ENCODE measurements at regions of chr19 and their contacts with region 1.

Region 1: DNA sequence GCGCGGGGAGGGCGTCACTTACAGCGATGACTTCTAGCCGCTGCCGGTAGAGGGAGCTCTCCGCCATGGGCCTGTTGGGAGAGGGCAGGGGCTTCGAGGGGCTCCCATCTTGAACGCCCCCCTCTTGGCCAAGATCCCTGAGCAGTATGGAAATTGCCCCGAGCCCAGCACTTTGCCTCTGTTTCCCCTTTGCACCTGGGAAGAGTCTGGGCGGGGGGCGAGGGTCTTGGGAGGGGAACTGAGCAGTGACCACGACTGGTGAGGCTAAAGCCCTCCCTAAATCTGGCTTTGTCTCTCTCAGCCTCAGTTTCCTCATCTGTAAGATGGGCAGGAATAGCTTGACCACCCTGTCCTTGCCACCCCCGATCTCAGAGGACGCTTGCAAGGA is 2.8 kb downstream of the PALM3 start:
- DNase-seq: peak; percentile 28
- H3K4me3 ChIP-seq: no peak overlapping the region
- H3K27ac ChIP-seq: no peak overlapping the region
- H3K4me1 ChIP-seq: peaks cover 0 to 16% (median 12%) of the 10 kb centered on the region in 4 donors
- H3K27me3 ChIP-seq: peaks cover 60% of the 10 kb centered on the region
- CTCF ChIP-seq: peak; percentile 54 to 70 (median 64)
- EP300 ChIP-seq: no peak
- POLR2A ChIP-seq: no peak

Region 2: GRCh38 chr19:13872695-13873389 is 186.2 kb before region 1 on chr19:
- in situ Hi-C with region 1: loop called in 2 of 4 experiments (anchors 10 to 25 kb)
- intact Hi-C with region 1: no loop called
- DNase-seq: no peak
- H3K4me3 ChIP-seq: peak overlapping the region; percentile 27 to 53 (median 38)
- H3K27ac ChIP-seq: peak overlapping the region in 3 of 4 donors; percentile 19 to 43 (median 26)
- H3K4me1 ChIP-seq: peaks cover 0 to 12% (median 7%) of the 10 kb centered on the region in 4 donors
- H3K27me3 ChIP-seq: no peaks in the 10 kb centered on the region
- CTCF ChIP-seq: peak in 3 of 5 experiments; percentile 8 to 31 (median 26)
- EP300 ChIP-seq: no peak
- POLR2A ChIP-seq: no peak

Region 3: DNA sequence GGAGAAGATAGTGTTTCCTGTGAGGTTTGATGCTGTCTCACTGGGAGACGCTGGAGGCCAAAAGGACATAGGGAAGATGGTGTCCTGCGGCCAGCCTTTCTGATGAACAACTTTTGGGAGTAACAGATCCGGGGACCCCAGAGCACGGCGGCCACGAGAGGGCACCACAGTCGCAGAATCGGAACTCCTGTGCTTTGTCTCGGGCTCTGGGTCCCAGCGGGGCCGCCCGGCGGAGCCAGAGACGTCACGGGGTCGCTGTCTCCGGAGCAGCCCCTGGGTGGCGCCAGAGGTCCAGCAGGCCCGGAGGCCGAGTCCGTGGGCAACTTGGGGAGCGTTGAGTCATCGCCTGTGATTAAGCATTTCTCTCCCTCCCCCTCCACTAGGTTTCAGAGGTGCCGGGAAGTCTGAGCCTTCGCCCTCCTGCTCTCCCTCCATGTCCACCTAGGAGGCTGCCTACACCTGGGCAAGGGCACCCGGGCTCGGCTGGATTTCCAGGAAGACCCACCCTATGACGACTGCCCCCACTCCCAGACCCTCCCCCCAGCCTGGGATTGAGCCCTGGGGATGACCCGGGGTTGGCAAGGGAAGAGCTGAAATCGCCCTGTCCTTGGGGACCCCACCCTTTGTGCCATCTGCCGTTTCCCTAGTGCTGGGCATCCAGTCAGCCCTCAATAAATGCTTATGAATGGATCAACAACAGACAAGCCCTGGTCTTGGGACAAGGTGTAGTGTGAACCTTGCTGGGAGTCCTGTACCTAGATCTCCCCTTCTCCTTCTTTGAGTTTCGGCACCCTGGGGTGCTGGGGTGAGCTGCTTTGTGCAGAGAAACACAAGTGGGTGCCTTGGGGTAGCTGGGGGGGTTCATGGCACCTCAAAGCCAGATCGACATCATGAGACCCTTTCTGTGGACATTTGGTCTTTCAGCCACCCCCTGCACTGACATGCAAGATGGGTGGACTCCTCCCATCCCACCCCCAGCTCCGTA is 178.7 kb before region 1 on chr19:
- in situ Hi-C with region 1: loop called in 3 of 4 experiments (anchors 10 to 25 kb)
- intact Hi-C with region 1: no loop called
- DNase-seq: peak; percentile 99
- H3K4me3 ChIP-seq: peak overlapping the region in 2 of 4 donors; percentile 18 to 26
- H3K27ac ChIP-seq: peak overlapping the region; percentile 72 to 85 (median 84)
- H3K4me1 ChIP-seq: peaks cover 14 to 41% (median 35%) of the 10 kb centered on the region in 4 donors
- H3K27me3 ChIP-seq: no peaks in the 10 kb centered on the region
- CTCF ChIP-seq: peak; percentile 97 to 100 (median 98)
- EP300 ChIP-seq: peak; percentile 18
- POLR2A ChIP-seq: no peak

Region 4: DNA sequence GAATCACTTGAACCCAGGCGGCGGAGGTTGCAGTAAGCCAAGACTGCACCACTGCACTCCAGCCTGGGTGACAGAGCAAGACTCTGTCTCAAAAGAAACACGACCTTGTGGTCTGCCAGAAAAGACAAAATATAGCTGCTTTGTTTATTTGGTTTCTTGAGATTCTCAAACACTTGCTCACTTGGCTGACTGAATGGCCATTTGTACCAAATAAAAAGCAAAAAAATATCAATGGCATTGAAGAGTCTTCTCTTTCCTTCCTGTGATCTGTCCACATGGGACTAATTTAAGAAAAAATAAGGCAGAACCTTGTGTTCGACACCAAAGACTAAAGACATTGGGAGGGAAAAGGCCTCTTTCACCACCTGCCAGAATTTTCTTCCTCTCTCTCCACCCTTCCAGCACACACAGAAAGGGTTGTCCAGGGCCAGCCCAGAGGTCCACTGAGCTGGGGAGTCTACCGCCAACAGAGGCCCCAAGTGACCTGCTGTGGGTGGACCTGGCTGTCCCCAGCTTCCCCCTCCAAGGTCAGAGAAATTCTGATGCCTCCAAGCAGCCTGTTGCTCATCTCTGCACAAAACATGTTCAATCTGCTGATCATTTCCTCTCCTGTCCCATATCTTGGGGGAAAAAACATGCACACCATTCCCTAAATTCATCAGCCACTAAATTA is 159.0 kb before region 1 on chr19:
- in situ Hi-C with region 1: loop called in 2 of 4 experiments (anchors 10 to 25 kb)
- intact Hi-C with region 1: no loop called
- DNase-seq: no peak
- H3K4me3 ChIP-seq: no peak overlapping the region
- H3K27ac ChIP-seq: peak overlapping the region; percentile 53 to 77 (median 72)
- H3K4me1 ChIP-seq: peaks cover 0 to 12% (median 8%) of the 10 kb centered on the region in 4 donors
- H3K27me3 ChIP-seq: no peaks in the 10 kb centered on the region
- CTCF ChIP-seq: no peak
- EP300 ChIP-seq: no peak
- POLR2A ChIP-seq: no peak

Region 5: DNA sequence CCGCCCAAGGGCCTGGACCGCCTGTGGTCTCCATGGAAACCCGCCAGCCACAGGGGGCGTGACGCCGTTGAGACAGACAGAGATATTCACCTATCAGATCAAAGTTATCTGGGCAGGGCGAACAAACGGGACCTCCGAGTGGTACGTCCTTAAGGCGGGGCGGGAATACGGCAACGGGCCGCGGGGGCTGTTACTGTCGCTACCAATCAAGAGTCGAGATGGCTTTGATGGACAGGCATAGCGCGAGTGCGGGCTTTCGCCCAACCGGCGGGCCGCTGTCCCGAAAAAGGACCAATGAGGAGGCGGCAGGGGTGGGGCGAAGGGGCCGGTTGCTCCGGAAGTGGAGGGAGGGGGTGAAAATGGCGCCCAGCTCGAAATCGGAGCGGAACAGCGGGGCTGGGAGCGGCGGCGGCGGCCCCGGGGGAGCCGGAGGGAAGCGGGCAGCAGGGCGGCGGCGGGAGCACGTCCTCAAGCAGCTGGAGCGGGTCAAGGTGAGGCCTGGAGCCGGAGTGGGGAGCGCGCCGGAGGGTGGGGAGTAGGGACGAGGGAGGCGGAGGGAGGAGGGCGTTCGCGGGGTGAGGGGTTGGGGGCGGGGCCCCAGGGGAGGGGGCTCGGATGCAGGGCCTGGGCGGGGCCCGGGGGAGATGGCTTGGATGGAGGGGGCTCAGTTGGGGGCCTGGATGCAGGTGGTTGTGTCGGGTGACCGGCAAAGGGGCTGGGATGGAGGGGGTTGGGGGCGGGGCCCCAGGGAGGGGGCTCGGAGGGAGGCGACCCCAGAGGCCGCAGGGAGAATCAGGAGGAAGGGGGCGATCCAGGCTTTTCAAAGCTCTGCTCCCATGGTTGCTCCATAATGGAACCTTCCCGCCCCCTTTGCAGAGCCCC is 106.7 kb before region 1 on chr19 and contains the start of gene DCAF15:
- in situ Hi-C with region 1: no loop called
- intact Hi-C with region 1: no loop called
- DNase-seq: peak; percentile 99
- H3K4me3 ChIP-seq: peak within 1 kb of the TSS; percentile 67 to 100 (median 84)
- H3K27ac ChIP-seq: peak within 1 kb of the TSS; percentile 84 to 91 (median 88)
- H3K4me1 ChIP-seq: peaks cover 3 to 16% (median 13%) of the 10 kb centered on the region in 4 donors
- H3K27me3 ChIP-seq: no peaks in the 10 kb centered on the region
- CTCF ChIP-seq: no peak
- EP300 ChIP-seq: no peak
- POLR2A ChIP-seq: peak; percentile 72
- total RNA-seq, gene DCAF15: 26.2 to 61.7 (median 35.8) TPM

Region 6: DNA sequence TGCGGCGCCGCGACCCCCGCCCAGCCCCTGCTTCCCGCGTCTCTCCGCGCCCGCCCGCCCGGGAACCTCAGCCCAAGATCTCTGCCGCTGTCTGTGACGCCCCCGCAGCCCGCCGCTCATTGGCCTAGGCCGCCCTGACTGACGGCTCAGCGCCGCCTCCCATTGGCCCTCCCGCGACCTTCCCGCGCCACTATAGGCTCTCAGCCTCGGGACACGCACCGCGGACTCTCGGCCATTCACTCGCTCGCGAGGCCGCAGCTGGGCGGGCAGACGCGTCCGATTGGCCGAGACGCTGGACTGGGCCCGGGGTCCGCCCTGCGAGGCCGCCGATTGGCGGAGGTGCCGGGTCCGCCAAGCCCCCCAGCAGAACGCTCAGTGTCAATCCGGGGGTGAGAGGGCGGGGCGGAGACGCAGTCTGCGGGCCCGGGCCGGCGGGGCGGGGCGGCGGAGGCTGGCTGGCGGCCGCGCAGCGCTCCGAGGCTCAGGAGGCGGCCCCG is 58.6 kb after region 1 on chr19 and contains the start of gene PRKACA:
- in situ Hi-C with region 1: no loop called
- intact Hi-C with region 1: no loop called
- DNase-seq: peak; percentile 99
- H3K4me3 ChIP-seq: peak within 1 kb of the TSS; percentile 92 to 99 (median 96)
- H3K27ac ChIP-seq: peak within 1 kb of the TSS; percentile 94 to 100 (median 100)
- H3K4me1 ChIP-seq: peaks cover 23 to 63% (median 45%) of the 10 kb centered on the region in 4 donors
- H3K27me3 ChIP-seq: no peaks in the 10 kb centered on the region
- CTCF ChIP-seq: no peak
- EP300 ChIP-seq: no peak
- POLR2A ChIP-seq: no peak
- total RNA-seq, gene PRKACA: 16.7 to 74.8 (median 39.5) TPM

Region 7: GRCh38 chr19:14187561-14187960 is 128.5 kb after region 1 on chr19:
- in situ Hi-C with region 1: no loop called
- intact Hi-C with region 1: no loop called
- DNase-seq: no peak
- H3K4me3 ChIP-seq: no peak overlapping the region
- H3K27ac ChIP-seq: no peak overlapping the region
- H3K4me1 ChIP-seq: peaks cover 0 to 5% (median 2%) of the 10 kb centered on the region in 4 donors
- H3K27me3 ChIP-seq: no peaks in the 10 kb centered on the region
- CTCF ChIP-seq: no peak
- EP300 ChIP-seq: no peak
- POLR2A ChIP-seq: no peak

Region 8: GRCh38 chr19:14487370-14488125 is 428.5 kb after region 1 on chr19:
- in situ Hi-C with region 1: no loop called
- intact Hi-C with region 1: no loop called
- DNase-seq: no peak
- H3K4me3 ChIP-seq: no peak overlapping the region
- H3K27ac ChIP-seq: no peak overlapping the region
- H3K4me1 ChIP-seq: peaks cover 0 to 14% (median 9%) of the 10 kb centered on the region in 4 donors
- H3K27me3 ChIP-seq: no peaks in the 10 kb centered on the region
- CTCF ChIP-seq: no peak
- EP300 ChIP-seq: no peak
- POLR2A ChIP-seq: no peak

Region 9: DNA sequence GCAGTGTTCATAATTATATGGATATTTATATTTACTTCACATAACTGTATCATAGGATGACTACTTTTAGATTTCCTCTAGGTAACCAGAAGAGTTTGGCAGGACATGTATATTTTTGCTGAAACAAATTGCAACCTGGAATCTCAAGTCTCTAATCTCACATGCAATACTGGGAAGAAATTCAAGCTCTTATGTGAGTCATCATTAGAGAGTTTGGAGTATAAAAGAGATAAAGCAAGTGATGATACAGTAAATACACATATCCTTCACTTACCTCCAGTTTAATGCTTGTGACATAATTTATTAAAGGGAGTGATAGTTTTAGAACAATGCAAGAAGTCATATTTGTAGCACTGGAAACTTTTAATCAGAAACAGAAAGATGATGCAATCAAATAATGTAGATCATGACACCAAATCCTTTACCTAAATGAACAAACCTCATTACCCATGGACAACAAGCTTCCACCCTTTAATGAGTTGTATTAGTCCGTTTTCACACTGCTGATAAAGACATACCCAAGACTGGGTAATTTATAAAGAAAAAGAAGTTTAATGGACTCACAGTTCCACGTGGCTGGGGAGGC is 842.7 kb after region 1 on chr19:
- in situ Hi-C with region 1: no loop called
- intact Hi-C with region 1: loop called (anchors 5 kb)
- DNase-seq: no peak
- H3K4me3 ChIP-seq: no peak overlapping the region
- H3K27ac ChIP-seq: no peak overlapping the region
- H3K4me1 ChIP-seq: no peaks in the 10 kb centered on the region
- H3K27me3 ChIP-seq: peaks cover 15% of the 10 kb centered on the region
- CTCF ChIP-seq: no peak
- EP300 ChIP-seq: no peak
- POLR2A ChIP-seq: no peak

Measured in transverse colon (tissue), 4 donors.